ENCODE measurements at regions of chr10 and their contacts with region 1.

Region 1: GRCh38 chr10:104121520-104122224 is at the start of gene SFR1:
- DNase-seq: peak; percentile 99
- ATAC-seq: peak; percentile 94
- H3K4me3 Mint-ChIP-seq: peak within 1 kb of the TSS; percentile 93
- H3K27ac Mint-ChIP-seq: peak within 1 kb of the TSS; percentile 97
- H3K4me1 Mint-ChIP-seq: peaks cover 27% of the 10 kb centered on the region
- H3K27me3 Mint-ChIP-seq: peaks cover 13% of the 10 kb centered on the region
- total RNA-seq, gene SFR1: 13.0 to 14.9 TPM

Region 2: GRCh38 chr10:103888113-103888841 is 233.4 kb before region 1 on chr10:
- CTCF ChIA-PET with region 1: interaction called, 60 read pairs
- POLR2A ChIA-PET with region 1: interaction called, 15 read pairs
- DNase-seq: no peak
- ATAC-seq: peak; percentile 79
- H3K4me3 Mint-ChIP-seq: no peak overlapping the region
- H3K27ac Mint-ChIP-seq: peak overlapping the region; percentile 61
- H3K4me1 Mint-ChIP-seq: peaks cover 23% of the 10 kb centered on the region
- H3K27me3 Mint-ChIP-seq: no peaks in the 10 kb centered on the region

Region 3: GRCh38 chr10:103901299-103901698 is 220.4 kb before region 1 on chr10:
- CTCF ChIA-PET with region 1: interaction called, 6 read pairs
- POLR2A ChIA-PET with region 1: interaction called, 10 read pairs
- DNase-seq: no peak
- ATAC-seq: peak; percentile 84
- H3K4me3 Mint-ChIP-seq: peak overlapping the region; percentile 10
- H3K27ac Mint-ChIP-seq: peak overlapping the region; percentile 48
- H3K4me1 Mint-ChIP-seq: peaks cover 49% of the 10 kb centered on the region
- H3K27me3 Mint-ChIP-seq: no peaks in the 10 kb centered on the region

Region 4: GRCh38 chr10:103918053-103918846 is 203.4 kb before region 1 on chr10 and contains the start of gene STN1:
- CTCF ChIA-PET with region 1: interaction called, 10 read pairs
- POLR2A ChIA-PET with region 1: interaction called, 9 read pairs
- DNase-seq: peak; percentile 97
- ATAC-seq: peak; percentile 95
- H3K4me3 Mint-ChIP-seq: peak within 1 kb of the TSS; percentile 98
- H3K27ac Mint-ChIP-seq: peak within 1 kb of the TSS; percentile 97
- H3K4me1 Mint-ChIP-seq: peaks cover 36% of the 10 kb centered on the region
- H3K27me3 Mint-ChIP-seq: no peaks in the 10 kb centered on the region
- total RNA-seq, gene STN1: 48.8 to 49.8 TPM

Region 5: DNA sequence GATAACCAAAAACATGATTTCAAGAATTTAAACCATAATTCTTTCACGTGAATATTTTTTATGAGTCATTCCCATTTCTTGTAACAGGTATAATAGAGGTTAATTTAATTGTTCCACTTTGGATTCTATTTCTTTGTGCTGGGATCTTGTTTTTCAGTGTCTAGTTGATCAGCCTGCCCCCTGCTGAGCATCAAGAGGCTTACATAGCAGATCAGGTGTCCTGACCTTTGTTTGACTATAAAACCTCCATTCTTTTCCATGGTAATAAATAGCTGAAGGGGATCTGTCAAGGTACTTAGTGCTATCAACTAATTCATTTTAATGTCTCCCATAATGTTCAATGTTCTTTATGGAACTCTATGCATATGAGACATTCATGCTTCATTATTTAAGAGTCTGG is 40.9 kb before region 1 on chr10:
- CTCF ChIA-PET with region 1: interaction called, 14 read pairs
- POLR2A ChIA-PET with region 1: interaction called, 6 read pairs
- DNase-seq: no peak
- ATAC-seq: peak; percentile 55
- H3K4me3 Mint-ChIP-seq: no peak overlapping the region
- H3K27ac Mint-ChIP-seq: no peak overlapping the region
- H3K4me1 Mint-ChIP-seq: no peaks in the 10 kb centered on the region
- H3K27me3 Mint-ChIP-seq: peaks cover 2% of the 10 kb centered on the region

Region 6: DNA sequence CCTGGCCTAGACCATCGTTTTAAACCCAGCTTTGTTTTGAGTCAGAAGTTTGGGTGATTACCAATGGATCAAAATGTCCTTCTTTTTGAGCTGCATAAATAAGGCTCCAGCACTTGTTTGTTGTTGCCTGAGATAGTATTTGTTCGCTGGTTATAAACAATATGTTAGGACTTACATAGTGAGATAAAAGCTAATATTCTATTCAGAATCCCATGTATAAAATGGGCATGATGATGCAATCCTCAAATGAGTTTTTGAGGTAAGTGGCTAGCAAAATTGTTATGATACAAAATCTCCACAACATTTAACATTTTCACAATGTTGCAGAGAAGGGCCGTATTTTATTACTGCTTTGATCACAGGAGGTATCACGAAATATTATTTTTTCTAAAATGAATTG is 62.0 kb after region 1 on chr10:
- CTCF ChIA-PET with region 1: no interaction called
- POLR2A ChIA-PET with region 1: no interaction called
- DNase-seq: no peak
- ATAC-seq: no peak
- H3K4me3 Mint-ChIP-seq: no peak overlapping the region
- H3K27ac Mint-ChIP-seq: no peak overlapping the region
- H3K4me1 Mint-ChIP-seq: no peaks in the 10 kb centered on the region
- H3K27me3 Mint-ChIP-seq: peaks cover 5% of the 10 kb centered on the region

Region 7: GRCh38 chr10:104254493-104255310 is 133.0 kb after region 1 on chr10 and contains the start of gene GSTO1:
- CTCF ChIA-PET with region 1: interaction called, 4 read pairs
- POLR2A ChIA-PET with region 1: interaction called, 10 read pairs
- DNase-seq: peak; percentile 62
- ATAC-seq: peak; percentile 81
- H3K4me3 Mint-ChIP-seq: peak within 1 kb of the TSS; percentile 93
- H3K27ac Mint-ChIP-seq: peak within 1 kb of the TSS; percentile 97
- H3K4me1 Mint-ChIP-seq: peaks cover 50% of the 10 kb centered on the region
- H3K27me3 Mint-ChIP-seq: peaks cover 4% of the 10 kb centered on the region
- total RNA-seq, gene GSTO1: 114 to 119 TPM

Measured in activated CD8-positive, alpha-beta T cell treated with anti-CD3 and anti-CD28 coated beads, Interleukin-2, amount 10 ng/mL, durations not matched to agents 7 days and 5 days (primary cell).